Activated T-helper 1 cell treated with anti-CD3 and anti-CD28 coated beads, Interleukin-12 subunit alpha, Interleukin-12 subunit beta, Interleukin-2, Interleukin-4 antibody, amounts not matched to agents 30 ng/mL and 10 ng/mL and 1 ng/mL, durations not matched to agents 14 hours and 24 hours and 36 hours (primary cell): ENCODE measurements at regions of chr1 and their contacts with region 1.

Region 1: DNA sequence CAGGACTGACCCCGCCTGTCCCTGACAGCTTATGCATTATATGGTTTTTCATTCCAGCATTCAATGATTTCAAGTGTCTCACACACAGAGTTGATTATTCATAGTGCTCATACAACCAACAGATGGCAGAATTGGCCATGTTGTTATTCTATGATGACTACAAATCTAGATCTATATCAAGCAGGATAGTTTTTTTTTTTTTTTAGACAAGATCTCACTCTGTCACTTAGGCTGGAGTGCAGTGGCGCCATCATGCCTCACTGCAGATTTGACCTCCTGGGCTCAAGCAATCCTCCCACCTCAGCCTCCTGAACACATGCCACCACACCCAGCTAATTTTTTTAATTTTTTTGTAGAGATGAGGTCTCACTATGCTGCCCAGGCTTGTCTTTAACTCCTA is 40.1 kb upstream of the LRRC8D start:
- DNase-seq: no peak
- H3K4me3 Mint-ChIP-seq: peak overlapping the region; percentile 59
- H3K27ac Mint-ChIP-seq: peak overlapping the region; percentile 97
- H3K4me1 Mint-ChIP-seq: peaks cover 48% of the 10 kb centered on the region
- H3K27me3 Mint-ChIP-seq: peaks cover 4% of the 10 kb centered on the region

Region 2: DNA sequence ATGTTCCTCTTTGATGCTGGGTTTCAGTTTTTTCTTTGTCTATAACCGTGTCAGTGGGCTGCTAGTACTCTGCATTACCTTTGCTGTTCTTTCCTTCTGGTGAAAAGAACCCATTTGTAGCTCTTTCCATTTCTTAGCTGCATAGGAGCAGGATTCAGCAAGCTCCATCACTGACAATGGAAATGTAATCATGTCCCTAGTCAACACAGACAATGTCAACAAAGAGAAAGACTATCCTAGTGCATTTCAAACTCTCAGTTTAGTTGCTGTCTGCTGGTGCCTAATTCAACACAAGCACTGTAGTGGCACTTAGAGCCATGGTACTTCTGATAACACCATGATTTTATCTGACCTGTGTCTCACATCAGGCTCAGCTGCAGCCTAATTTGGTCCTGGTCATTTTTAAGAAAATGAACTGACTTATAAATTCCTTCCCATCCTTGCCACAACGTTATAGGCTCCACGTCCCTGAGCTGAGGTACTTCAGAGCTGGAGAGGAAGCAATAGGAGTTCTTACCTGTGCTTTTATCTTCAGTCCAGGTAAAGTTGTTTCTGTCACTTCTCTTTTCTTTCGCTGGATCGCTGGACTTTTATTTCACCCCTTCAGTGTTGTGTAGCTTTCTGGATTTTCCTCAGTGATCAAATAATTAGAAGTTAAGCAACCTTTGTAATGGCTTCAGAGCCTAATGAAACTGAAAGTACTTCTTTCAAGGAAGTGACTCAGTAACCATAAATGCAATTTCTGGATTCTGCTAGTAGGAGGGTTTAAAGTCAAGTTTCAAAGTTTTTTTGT is 758.4 kb before region 1 on chr1 and contains the start of gene GBP3:
- intact Hi-C with region 1: no loop called
- DNase-seq: no peak
- H3K4me3 Mint-ChIP-seq: peak within 1 kb of the TSS; percentile 86
- H3K27ac Mint-ChIP-seq: peak within 1 kb of the TSS; percentile 84
- H3K4me1 Mint-ChIP-seq: peaks cover 64% of the 10 kb centered on the region
- H3K27me3 Mint-ChIP-seq: no peaks in the 10 kb centered on the region
- total RNA-seq, gene GBP3: 12.0 and 14.5 TPM in 2 replicates

Region 3: DNA sequence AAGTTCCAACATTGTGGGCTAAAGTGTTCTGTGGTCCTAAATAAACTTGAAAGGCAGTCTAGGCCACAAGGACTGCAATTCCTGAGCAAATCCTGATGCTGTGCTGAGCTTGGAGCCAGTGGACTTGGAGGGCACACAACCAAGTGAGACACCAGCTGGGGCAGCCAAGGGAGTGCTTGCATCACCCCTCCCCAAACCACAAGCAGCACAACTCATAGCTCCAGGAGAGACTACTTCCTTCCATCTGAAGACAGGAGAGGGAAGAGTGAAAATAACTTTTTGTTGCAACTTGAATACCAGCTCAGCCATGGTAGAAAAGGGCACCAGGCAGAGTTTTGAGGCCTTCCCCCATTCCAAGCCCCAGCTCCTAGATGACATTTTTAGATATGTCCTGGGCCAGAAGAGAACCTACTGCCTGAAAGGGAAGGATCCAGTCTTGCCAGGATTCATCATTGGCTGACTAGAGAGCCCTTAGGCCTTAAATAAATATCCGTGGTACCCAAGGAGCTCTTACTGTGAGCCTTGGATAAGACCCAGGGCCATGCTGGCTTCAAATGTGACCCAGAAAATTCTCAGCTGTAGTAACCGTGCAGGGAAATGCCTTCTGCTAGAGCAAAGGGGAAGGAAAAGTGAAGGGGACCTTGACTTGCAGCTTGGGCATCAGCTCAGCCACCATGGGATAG is 291.5 kb before region 1 on chr1:
- intact Hi-C with region 1: loop called (anchors 2 kb)
- DNase-seq: no peak
- H3K4me3 Mint-ChIP-seq: no peak overlapping the region
- H3K27ac Mint-ChIP-seq: peak overlapping the region; percentile 82
- H3K4me1 Mint-ChIP-seq: peaks cover 35% of the 10 kb centered on the region
- H3K27me3 Mint-ChIP-seq: peaks cover 4% of the 10 kb centered on the region

Region 4: GRCh38 chr1:89762779-89763648 is 17.7 kb before region 1 on chr1:
- intact Hi-C with region 1: loop called (anchors 2 kb)
- DNase-seq: peak; percentile 78
- H3K4me3 Mint-ChIP-seq: peak overlapping the region; percentile 92
- H3K27ac Mint-ChIP-seq: peak overlapping the region; percentile 93
- H3K4me1 Mint-ChIP-seq: peaks cover 63% of the 10 kb centered on the region
- H3K27me3 Mint-ChIP-seq: no peaks in the 10 kb centered on the region

Region 5: GRCh38 chr1:89855413-89856123 is 74.8 kb after region 1 on chr1:
- intact Hi-C with region 1: loop called (anchors 1 kb)
- DNase-seq: no peak
- H3K4me3 Mint-ChIP-seq: no peak overlapping the region
- H3K27ac Mint-ChIP-seq: no peak overlapping the region
- H3K4me1 Mint-ChIP-seq: peaks cover 4% of the 10 kb centered on the region
- H3K27me3 Mint-ChIP-seq: no peaks in the 10 kb centered on the region

Region 6: DNA sequence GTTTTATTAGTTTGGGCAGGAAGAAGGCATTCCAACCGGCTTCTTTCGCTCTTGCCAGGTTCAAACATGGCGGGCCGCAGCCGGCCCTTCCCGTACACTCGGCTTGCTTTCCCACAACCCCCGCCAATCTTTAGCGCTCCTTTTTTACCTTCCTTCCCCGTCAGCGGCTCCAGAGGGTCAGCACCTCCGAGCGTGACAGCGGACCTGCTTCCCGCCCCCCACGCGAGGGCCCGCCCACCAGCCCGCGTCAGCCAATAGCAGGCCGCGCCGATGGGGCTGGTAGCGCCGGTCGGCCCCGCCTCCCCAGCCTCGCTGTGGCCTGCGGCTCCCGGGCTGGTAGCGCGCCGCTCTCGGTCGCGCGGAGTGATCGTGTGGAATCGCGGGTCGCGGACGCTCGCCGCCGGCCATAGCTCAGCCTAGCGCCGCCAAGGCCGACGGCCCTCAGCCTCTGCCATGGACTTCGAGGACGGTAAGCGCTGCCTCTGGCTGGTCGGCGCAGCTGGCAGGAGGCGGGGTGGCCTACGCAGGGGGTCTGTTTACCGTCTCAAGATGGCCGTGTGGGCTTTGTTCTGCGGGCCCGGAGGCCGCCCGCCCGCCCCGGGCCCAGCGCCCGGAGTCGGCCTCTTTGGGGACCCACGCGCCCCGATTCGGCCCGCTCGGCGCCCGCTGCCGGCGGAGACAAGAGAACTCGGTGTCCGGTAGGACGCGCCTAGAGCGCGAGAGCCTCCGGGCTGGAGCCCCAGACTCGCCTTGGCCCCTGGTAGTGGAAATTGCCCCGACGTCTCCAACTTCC is 214.3 kb after region 1 on chr1 and contains the start of gene ZNF326:
- intact Hi-C with region 1: loop called (anchors 1 kb)
- DNase-seq: peak; percentile 93
- H3K4me3 Mint-ChIP-seq: peak within 1 kb of the TSS; percentile 99
- H3K27ac Mint-ChIP-seq: peak within 1 kb of the TSS; percentile 97
- H3K4me1 Mint-ChIP-seq: peaks cover 46% of the 10 kb centered on the region
- H3K27me3 Mint-ChIP-seq: no peaks in the 10 kb centered on the region
- total RNA-seq, gene ZNF326: 37.3 and 39.1 TPM in 2 replicates

Region 7: DNA sequence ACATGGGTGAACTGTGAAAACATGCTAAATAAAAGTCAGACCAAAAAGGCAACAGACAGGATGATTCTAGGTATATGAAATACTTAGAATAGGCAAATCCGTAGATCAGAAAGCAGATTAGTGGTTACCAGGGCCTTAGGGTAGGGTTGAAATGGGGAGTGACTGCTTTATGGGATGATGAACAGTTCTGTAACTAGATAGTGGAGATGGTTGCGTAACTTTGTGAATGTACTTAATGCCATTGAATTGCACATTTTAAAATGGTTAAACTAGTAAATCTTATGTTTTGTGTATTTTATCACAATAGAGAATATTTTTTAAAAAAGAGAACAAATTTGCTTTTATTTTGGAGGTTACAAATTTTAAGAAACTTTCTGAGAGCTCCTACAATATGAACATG is 231.6 kb after region 1 on chr1:
- intact Hi-C with region 1: no loop called
- DNase-seq: no peak
- H3K4me3 Mint-ChIP-seq: no peak overlapping the region
- H3K27ac Mint-ChIP-seq: no peak overlapping the region
- H3K4me1 Mint-ChIP-seq: peaks cover 9% of the 10 kb centered on the region
- H3K27me3 Mint-ChIP-seq: no peaks in the 10 kb centered on the region